ENCODE measurements at regions of chr1 and their contacts with region 1.

Region 1: GRCh38 chr1:228090613-228091081 is 8.1 kb downstream of the ARF1 start:
- DNase-seq: no peak
- ATAC-seq: peak; percentile 28
- H3K4me3 ChIP-seq: no peak overlapping the region
- H3K27ac ChIP-seq: no peak overlapping the region
- H3K4me1 ChIP-seq: peaks cover 48% of the 10 kb centered on the region
- H3K27me3 ChIP-seq: no peaks in the 10 kb centered on the region
- CTCF ChIP-seq: 0 out of 6 replicates have a peak, but pooled peaks of 1 of the 3 experiments have one; percentile 4
- EP300 ChIP-seq: no peak
- POLR2A ChIP-seq: no peak
- RAD21 ChIP-seq: 0 out of 2 replicates have a peak, but pooled peaks have one; percentile 2

Region 2: GRCh38 chr1:227465256-227465655 is 625.4 kb before region 1 on chr1:
- CTCF ChIA-PET with region 1: no interaction called
- POLR2A ChIA-PET with region 1: interaction called, 10 read pairs
- RAD21 ChIA-PET with region 1: no interaction called
- SMC1A ChIA-PET with region 1: no interaction called
- in situ Hi-C with region 1: no loop called
- intact Hi-C with region 1: no loop called
- DNase-seq: no peak
- ATAC-seq: no peak
- H3K4me3 ChIP-seq: no peak overlapping the region
- H3K27ac ChIP-seq: no peak overlapping the region
- H3K4me1 ChIP-seq: no peaks in the 10 kb centered on the region
- H3K27me3 ChIP-seq: peaks cover 0 to 3% of the 10 kb centered on the region in 2 experiments; a peak in 1 of 4 replicates
- CTCF ChIP-seq: peak in 2 of 3 experiments; percentile 7 to 10; a peak in 1 of 6 replicates
- EP300 ChIP-seq: no peak
- POLR2A ChIP-seq: no peak
- RAD21 ChIP-seq: no peak

Measured in GM12878 (cell line).